ENCODE measurements at regions of chr1 and their contacts with region 1.

Region 1: GRCh38 chr1:201036188-201036842 is 12.8 kb upstream of the KIF21B start:
- DNase-seq: no peak
- ATAC-seq: no peak
- H3K4me3 ChIP-seq: no peak overlapping the region
- H3K27ac ChIP-seq: no peak overlapping the region
- H3K4me1 ChIP-seq: 0 out of 5 replicates have a peak, but pooled peaks cover 0 to 2% of the 10 kb centered on the region in 2 experiments
- H3K27me3 ChIP-seq: peaks cover 9 to 27% of the 10 kb centered on the region in 2 experiments
- CTCF ChIP-seq: no peak
- EP300 ChIP-seq: no peak
- POLR2A ChIP-seq: no peak
- RAD21 ChIP-seq: no peak

Region 2: GRCh38 chr1:201023517-201023902 is 12.8 kb before region 1 on chr1 and contains the start of gene KIF21B:
- CTCF ChIA-PET with region 1: no interaction called
- POLR2A ChIA-PET with region 1: interaction called, 12 read pairs
- in situ Hi-C with region 1: no loop called
- intact Hi-C with region 1: no loop called
- DNase-seq: peak; percentile 94 to 99 (median 98)
- ATAC-seq: peak; percentile 91
- H3K4me3 ChIP-seq: peak within 1 kb of the TSS; percentile 56
- H3K27ac ChIP-seq: peak within 1 kb of the TSS; percentile 43; the same call in 2 of the 3 replicates
- H3K4me1 ChIP-seq: peaks cover 52 to 78% of the 10 kb centered on the region in 2 experiments
- H3K27me3 ChIP-seq: peaks cover 0 to 2% of the 10 kb centered on the region in 2 experiments; a peak in 1 of 5 replicates
- CTCF ChIP-seq: no peak
- EP300 ChIP-seq: no peak
- POLR2A ChIP-seq: no peak
- RAD21 ChIP-seq: no peak
- polyA plus RNA-seq, gene KIF21B: 0.46 to 0.48 TPM